HEK293 (cell line): ENCODE measurements at regions of chr4 and their contacts with region 1.

Region 1: GRCh38 chr4:54971474-54971950 is 153.9 kb downstream of the KDR start:
- H3K4me3 ChIP-seq: no peak overlapping the region
- H3K27ac ChIP-seq: no peak overlapping the region
- H3K4me1 ChIP-seq: no peaks in the 10 kb centered on the region
- CTCF ChIP-seq: peak; percentile 42; the same call in 1 of the 2 replicates

Region 2: DNA sequence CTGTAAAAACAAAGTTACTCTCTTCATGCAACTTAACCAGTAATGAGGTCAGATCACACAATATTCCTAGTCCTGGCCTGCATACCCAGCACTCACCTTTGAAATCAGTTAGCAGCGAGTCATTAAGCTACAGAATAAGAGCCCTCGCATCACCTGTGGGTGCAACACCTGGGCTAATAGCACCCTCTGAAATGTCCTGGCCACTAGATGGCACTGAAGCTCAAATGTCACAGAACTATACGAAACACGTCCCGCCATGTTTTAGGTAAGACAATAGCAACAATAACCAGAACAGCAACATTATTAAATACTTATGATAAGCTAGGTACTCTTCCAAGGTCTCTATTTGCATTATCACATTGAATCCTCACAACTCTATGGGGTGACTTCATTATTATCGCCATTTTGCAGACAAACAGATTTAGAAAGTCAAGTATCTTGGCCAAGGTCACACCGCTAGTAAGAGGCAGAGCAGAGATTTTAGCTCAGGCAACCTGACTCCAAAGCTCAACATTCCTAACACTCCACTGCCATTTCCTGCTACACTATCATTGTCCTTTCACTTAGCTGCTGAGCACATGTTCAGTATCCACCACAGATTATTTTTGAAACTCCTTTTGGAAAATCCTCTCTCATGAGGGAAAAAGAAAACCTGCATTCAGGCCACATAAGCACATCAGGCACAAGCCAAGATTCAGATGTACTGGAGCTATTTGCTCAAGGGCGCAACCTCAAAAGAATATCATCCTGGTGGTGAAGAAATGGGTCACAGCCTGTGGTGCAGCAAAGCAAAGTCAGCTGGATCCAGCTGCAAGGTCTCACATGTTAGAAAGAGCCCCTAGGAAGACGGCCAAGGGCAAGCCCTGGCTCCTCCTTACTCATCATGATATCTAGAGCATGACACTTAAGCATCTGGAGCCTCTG is 213.3 kb after region 1 on chr4:
- CTCF ChIA-PET with region 1: interaction called, 12 read pairs
- POLR2A ChIA-PET with region 1: no interaction called
- H3K4me3 ChIP-seq: no peak overlapping the region
- H3K27ac ChIP-seq: no peak overlapping the region
- H3K4me1 ChIP-seq: no peaks in the 10 kb centered on the region
- CTCF ChIP-seq: no peak

Region 3: GRCh38 chr4:55321707-55322264 is 350.3 kb after region 1 on chr4:
- CTCF ChIA-PET with region 1: interaction called, 45 read pairs
- POLR2A ChIA-PET with region 1: no interaction called
- H3K4me3 ChIP-seq: no peak overlapping the region
- H3K27ac ChIP-seq: no peak overlapping the region
- H3K4me1 ChIP-seq: no peaks in the 10 kb centered on the region
- CTCF ChIP-seq: peak; percentile 33; the same call in 1 of the 2 replicates